ENCODE measurements at regions of chr1 and their contacts with region 1.

Region 1: GRCh38 chr1:208821939-208822338 is 577.8 kb upstream of the PLXNA2 start:
- DNase-seq: no peak
- ATAC-seq: no peak
- H3K4me3 ChIP-seq: no peak overlapping the region
- H3K4me3 Mint-ChIP-seq: no peak overlapping the region
- H3K27ac ChIP-seq: no peak overlapping the region
- H3K27ac Mint-ChIP-seq: no peak overlapping the region
- H3K4me1 ChIP-seq: no peaks in the 10 kb centered on the region
- H3K4me1 Mint-ChIP-seq: no peaks in the 10 kb centered on the region
- H3K27me3 ChIP-seq: no peaks in the 10 kb centered on the region
- H3K27me3 Mint-ChIP-seq: no peaks in the 10 kb centered on the region
- CTCF ChIP-seq: no peak

Region 2: DNA sequence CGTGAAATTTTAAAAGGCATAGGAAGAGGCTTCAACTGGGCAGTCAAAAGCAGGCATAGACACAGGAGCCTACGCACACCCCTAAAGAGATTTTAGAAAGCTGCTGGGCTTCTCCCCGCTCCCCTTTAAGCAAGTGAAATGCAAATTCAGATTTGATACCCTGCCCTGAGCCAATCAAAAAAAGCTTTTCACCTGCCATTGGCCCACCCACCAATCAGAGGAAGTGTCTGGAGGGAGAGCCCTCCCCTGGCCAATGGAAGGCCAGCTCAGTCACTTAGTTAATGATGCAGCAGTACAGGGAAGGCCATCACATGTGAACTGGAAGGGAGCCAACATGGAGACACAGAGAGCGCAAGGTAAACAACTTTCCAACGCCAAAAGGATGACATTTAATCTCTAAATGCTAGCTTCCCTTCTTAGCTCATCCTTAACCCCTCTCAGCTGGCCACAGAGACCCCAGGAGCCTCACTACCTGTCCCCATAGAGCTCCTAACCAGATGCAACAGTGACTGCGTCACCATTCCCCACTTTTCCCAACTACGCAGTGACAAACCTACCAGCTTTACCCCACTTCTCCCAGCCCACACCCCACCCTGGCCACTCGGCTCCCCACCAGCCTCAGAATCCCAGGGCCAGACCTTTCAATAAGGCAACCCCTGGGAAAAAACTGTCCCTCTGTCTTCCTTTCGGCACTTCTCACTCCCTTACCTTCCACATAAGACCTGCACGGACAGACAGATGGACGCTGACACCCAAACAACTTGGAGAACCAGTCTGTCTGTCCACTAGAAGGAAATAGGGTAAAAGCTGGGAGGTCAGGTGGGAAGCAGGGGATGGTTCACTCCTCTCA is 999.1 kb before region 1 on chr1:
- CTCF ChIA-PET with region 1: no interaction called
- POLR2A ChIA-PET with region 1: interaction called, 11 read pairs
- intact Hi-C with region 1: no loop called
- DNase-seq: peak; percentile 94
- ATAC-seq: peak; percentile 66
- H3K4me3 ChIP-seq: peak overlapping the region; percentile 42 to 100 (median 96)
- H3K4me3 Mint-ChIP-seq: peak overlapping the region; percentile 99
- H3K27ac ChIP-seq: peak overlapping the region; percentile 93 to 96
- H3K27ac Mint-ChIP-seq: peak overlapping the region; percentile 99
- H3K4me1 ChIP-seq: peaks cover 68 to 87% of the 10 kb centered on the region in 2 donors
- H3K4me1 Mint-ChIP-seq: peaks cover 90% of the 10 kb centered on the region
- H3K27me3 ChIP-seq: no peaks in the 10 kb centered on the region
- H3K27me3 Mint-ChIP-seq: peaks cover 4% of the 10 kb centered on the region
- CTCF ChIP-seq: no peak

Region 3: DNA sequence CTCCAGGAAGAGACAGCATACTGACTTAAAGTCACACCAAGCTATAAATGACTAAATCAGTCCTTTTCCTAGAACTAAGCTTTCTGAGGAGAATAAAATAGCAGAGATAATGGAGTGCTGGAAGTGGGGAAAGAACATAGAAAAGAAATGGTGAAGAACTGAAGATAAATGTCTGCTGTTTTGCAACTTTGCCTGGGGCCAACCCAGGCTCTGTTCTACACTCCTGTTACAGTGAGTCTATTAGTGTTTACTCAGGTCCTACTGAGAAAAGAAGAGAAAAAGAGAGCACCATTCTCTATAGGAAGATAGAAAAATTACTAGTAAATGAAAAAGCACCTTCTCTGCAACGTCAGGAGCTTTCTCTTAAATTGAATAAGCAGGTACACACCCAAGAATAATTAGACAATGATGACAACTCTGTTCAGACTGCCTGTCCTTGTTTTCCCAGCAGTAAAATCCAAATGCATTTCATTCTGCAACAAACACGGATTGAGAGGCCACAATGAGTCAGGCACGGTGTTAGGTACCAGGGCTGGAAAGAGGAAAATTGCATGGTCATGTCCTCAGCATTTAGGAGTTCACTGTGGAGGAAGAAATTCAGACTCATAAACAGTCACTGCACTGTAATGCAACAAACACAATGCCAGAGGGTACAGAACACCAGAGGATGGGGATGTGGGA is 622.2 kb after region 1 on chr1:
- CTCF ChIA-PET with region 1: no interaction called
- POLR2A ChIA-PET with region 1: no interaction called
- intact Hi-C with region 1: no loop called
- DNase-seq: no peak
- ATAC-seq: no peak
- H3K4me3 ChIP-seq: no peak overlapping the region
- H3K4me3 Mint-ChIP-seq: no peak overlapping the region
- H3K27ac ChIP-seq: no peak overlapping the region
- H3K27ac Mint-ChIP-seq: no peak overlapping the region
- H3K4me1 ChIP-seq: no peaks in the 10 kb centered on the region
- H3K4me1 Mint-ChIP-seq: no peaks in the 10 kb centered on the region
- H3K27me3 ChIP-seq: no peaks in the 10 kb centered on the region
- H3K27me3 Mint-ChIP-seq: peaks cover 4% of the 10 kb centered on the region
- CTCF ChIP-seq: no peak